ENCODE measurements at regions of chr5 and their contacts with region 1.

Region 1: GRCh38 chr5:179678223-179679013 is 2.4 kb downstream of the CBY3 start:
- DNase-seq: peak; percentile 97
- ATAC-seq: peak; percentile 91
- H3K4me3 Mint-ChIP-seq: peak overlapping the region; percentile 91
- H3K27ac Mint-ChIP-seq: peak overlapping the region; percentile 98
- H3K4me1 Mint-ChIP-seq: peaks cover 30% of the 10 kb centered on the region
- H3K27me3 Mint-ChIP-seq: no peaks in the 10 kb centered on the region
- CTCF ChIP-seq: no peak

Region 2: GRCh38 chr5:179613460-179614071 is 64.9 kb before region 1 on chr5:
- CTCF ChIA-PET with region 1: no interaction called
- POLR2A ChIA-PET with region 1: interaction called, 11 read pairs
- intact Hi-C with region 1: no loop called
- DNase-seq: peak; percentile 30
- ATAC-seq: peak; percentile 12
- H3K4me3 Mint-ChIP-seq: no peak overlapping the region
- H3K27ac Mint-ChIP-seq: peak overlapping the region; percentile 31
- H3K4me1 Mint-ChIP-seq: peaks cover 67% of the 10 kb centered on the region
- H3K27me3 Mint-ChIP-seq: no peaks in the 10 kb centered on the region
- CTCF ChIP-seq: no peak

Region 3: DNA sequence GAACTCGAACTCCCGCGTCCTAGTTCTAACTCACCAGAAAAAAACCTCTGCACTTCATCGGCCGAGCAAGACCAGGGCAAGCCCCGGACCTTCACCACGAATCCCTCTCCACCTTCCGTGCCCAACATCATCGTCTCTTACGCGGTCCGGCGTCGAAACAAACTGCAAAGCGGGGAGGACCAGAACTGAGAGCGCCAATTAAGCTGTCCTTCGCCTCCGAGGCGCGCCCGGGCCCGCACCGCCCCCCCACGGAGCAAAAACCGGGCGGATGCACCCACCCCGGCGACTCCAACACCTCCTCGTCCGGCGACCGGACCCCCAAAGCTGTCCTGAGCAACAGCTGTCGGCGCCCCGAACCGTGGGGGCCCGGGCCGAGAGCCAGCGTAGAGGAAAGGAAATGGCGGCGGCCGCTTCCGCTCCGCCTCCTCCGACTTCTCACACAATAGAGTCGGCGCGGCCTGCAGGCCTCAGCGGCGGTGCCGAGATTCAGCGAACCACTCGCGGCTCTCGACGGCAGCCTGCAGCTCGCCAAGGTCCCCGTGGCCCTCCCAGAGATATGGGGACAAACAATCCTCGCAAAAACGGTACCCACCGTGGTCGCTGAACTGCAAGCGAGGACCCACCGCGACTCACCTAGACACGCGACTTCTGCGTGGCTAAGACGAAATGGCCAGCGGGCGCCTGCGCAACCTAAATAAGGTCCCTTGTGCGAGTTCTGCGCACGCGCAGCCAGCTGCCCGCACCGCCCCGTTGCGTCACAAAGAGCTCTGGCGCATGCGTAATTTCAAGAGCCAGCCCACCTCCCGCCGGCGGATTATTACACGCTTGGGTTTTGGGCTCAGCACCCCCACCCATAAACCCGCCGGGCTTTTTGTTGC is 55.2 kb before region 1 on chr5 and contains the start of gene HNRNPH1:
- CTCF ChIA-PET with region 1: interaction called, 4 read pairs
- POLR2A ChIA-PET with region 1: interaction called, 55 read pairs
- intact Hi-C with region 1: no loop called
- DNase-seq: peak; percentile 99
- ATAC-seq: peak; percentile 79
- H3K4me3 Mint-ChIP-seq: peak within 1 kb of the TSS; percentile 82
- H3K27ac Mint-ChIP-seq: peak within 1 kb of the TSS; percentile 94
- H3K4me1 Mint-ChIP-seq: peaks cover 25% of the 10 kb centered on the region
- H3K27me3 Mint-ChIP-seq: no peaks in the 10 kb centered on the region
- CTCF ChIP-seq: peak; percentile 23
- total RNA-seq, gene HNRNPH1: 706 to 709 TPM

Region 4: DNA sequence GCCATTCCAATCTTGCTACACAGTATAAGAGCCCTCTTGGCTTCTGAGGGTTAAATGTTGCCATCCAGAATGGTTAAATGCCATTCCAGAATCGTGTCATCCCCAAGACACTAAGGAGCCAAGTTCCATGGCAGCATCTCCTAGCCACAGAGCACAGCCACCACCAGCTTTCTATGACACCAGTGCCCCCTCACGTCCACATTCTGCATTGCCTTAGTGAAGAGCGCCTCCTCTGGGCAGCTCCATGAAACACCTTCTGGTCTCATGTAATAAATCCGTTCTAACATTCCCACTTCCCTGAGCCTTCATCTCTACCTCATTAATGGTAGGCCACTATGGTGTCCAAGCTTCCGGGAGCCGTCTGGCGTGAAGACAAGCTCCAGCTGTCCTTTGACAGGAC is 10.0 kb before region 1 on chr5:
- CTCF ChIA-PET with region 1: interaction called, 14 read pairs
- POLR2A ChIA-PET with region 1: interaction called, 11 read pairs
- intact Hi-C with region 1: no loop called
- DNase-seq: peak; percentile 55
- ATAC-seq: peak; percentile 82
- H3K4me3 Mint-ChIP-seq: no peak overlapping the region
- H3K27ac Mint-ChIP-seq: no peak overlapping the region
- H3K4me1 Mint-ChIP-seq: no peaks in the 10 kb centered on the region
- H3K27me3 Mint-ChIP-seq: no peaks in the 10 kb centered on the region
- CTCF ChIP-seq: peak; percentile 52

Region 5: DNA sequence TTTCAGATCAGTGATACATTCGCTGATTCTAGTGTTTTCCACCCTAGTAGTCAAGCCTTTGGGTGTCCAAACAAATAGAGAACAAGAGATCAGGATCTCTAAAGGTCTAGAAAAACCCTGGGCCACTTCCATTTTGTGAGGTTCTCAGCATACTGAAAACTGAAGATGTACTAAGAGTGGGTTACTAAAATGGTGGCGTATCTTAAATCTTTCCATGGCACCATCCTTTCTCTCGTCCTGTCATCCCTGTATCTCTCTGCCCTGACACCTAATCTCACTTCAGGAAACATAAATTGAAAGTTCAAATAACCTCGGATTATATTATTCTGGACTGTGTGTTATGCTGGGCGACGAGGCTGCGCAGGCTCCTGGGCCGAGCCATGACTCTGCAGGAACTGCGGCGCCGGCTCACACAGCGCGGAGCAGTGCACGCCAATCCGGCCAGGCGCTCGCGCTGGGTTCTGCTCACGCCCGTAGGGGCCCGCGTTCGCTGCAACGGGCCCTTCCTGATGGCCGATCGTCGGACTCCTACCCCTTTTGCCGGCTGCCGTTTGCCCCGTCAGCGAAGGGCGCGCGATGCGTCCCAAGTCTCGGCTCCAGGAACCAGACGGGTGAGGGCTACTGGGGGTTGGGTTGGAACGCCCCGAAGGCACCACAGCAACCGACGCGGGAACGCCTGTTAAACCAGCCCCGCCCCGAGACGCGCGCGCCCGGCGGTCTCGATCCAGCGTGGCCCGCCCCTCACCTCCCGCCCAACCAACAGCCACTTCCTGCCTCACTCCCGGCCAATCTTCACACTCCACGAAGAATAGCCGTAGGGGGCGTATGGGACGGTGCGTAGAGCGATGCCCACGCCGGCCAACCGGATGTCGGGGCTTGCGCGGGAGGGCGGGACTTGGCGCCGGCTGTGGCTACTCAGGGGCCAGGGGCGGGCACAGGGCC is 19.8 kb after region 1 on chr5:
- CTCF ChIA-PET with region 1: interaction called, 27 read pairs
- POLR2A ChIA-PET with region 1: interaction called, 45 read pairs
- intact Hi-C with region 1: no loop called
- DNase-seq: peak; percentile 99
- ATAC-seq: peak; percentile 91
- H3K4me3 Mint-ChIP-seq: peak overlapping the region; percentile 96
- H3K27ac Mint-ChIP-seq: peak overlapping the region; percentile 99
- H3K4me1 Mint-ChIP-seq: peaks cover 31% of the 10 kb centered on the region
- H3K27me3 Mint-ChIP-seq: no peaks in the 10 kb centered on the region
- CTCF ChIP-seq: no peak

Region 6: DNA sequence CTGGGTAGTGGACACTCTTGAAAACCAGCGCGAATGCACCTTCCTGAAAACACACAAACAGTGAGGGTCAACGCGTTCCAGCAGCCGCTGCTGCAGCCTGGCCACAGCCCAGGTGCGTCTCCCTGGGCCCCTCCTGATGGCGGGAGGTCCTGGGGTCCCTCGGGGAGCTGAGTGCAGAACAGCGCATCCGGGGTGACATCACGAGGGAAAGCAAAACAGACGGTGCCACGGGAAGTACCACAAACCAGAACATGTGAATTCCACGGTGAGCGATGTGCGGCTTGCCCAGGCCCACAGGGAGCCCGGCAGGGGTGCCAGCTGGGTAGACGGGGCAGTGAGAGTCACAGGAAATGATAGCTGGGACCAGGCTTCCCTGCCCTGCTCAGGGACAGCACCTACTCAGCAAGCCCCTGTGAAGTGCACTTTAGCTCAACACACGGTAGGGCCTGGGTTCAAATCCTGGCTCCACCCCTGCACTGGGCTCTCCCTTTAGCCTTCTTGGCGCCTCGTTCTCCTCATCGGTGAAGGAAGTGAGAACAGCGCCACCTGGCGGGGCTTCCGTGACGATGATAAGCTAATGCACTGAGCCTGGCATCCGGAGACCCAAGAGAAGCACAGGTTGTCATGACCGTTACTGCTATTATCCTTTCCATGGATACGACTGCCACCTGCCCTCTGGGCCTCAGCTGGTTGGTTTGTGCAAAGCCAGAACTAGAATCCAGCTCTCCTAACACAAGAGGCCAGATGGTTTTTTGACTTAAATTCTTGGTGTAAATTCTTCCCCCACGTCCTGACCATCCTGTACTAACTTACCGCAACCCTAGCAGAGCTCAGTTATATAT is 650.1 kb after region 1 on chr5:
- CTCF ChIA-PET with region 1: no interaction called
- POLR2A ChIA-PET with region 1: no interaction called
- intact Hi-C with region 1: no loop called
- DNase-seq: peak; percentile 94
- ATAC-seq: peak; percentile 96
- H3K4me3 Mint-ChIP-seq: no peak overlapping the region
- H3K27ac Mint-ChIP-seq: no peak overlapping the region
- H3K4me1 Mint-ChIP-seq: peaks cover 2% of the 10 kb centered on the region
- H3K27me3 Mint-ChIP-seq: peaks cover 9% of the 10 kb centered on the region
- CTCF ChIP-seq: peak; percentile 88

Measured in activated CD8-positive, alpha-beta T cell treated with anti-CD3 and anti-CD28 coated beads for 36 hours (primary cell).